PC-9 (cell line): ENCODE measurements at regions of chr5 and their contacts with region 1.

Region 1: DNA sequence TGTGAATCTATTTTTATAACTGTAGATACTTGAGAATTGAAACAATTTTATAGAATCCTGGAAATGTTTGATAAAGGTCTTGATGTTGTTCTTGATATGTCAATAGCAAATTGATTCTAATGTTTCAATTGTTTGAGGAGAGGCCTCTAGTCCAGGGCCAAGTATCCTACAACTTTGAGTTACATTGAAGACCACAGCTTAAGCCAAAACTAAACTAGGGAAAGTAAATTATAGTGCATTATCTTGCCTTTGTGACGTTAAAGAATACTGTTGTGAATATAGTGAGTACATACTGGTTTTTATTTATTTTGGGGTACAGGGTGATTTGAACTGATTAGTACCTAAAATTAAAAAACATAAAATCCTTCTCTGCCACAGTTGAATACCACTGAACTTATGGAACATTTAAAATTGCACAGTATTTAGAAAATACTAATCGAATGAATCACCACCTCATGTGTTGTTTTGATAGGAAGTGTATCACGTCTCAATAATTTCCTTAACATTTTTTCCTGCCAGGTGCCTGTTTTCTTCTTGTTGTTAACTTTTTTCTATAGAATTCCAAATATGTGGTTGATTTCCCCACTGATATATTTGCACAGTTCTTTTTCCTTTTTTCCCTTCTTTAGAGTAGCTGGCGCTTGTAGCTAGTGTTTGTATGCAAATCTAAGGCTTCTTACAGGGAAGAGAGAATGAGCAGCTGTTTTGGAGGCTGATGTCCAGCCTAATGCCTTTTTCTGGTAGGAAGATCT is 12.5 kb downstream of the ARHGEF28 start:
- DNase-seq: peak in 1 of 2 experiments; percentile 95
- H3K4me3 ChIP-seq: peak overlapping the region; percentile 15; the same call in 1 of the 2 replicates
- H3K27ac ChIP-seq: peak overlapping the region; percentile 90
- H3K4me1 ChIP-seq: peaks cover 77% of the 10 kb centered on the region
- H3K27me3 ChIP-seq: no peaks in the 10 kb centered on the region
- CTCF ChIP-seq: no peak

Region 2: DNA sequence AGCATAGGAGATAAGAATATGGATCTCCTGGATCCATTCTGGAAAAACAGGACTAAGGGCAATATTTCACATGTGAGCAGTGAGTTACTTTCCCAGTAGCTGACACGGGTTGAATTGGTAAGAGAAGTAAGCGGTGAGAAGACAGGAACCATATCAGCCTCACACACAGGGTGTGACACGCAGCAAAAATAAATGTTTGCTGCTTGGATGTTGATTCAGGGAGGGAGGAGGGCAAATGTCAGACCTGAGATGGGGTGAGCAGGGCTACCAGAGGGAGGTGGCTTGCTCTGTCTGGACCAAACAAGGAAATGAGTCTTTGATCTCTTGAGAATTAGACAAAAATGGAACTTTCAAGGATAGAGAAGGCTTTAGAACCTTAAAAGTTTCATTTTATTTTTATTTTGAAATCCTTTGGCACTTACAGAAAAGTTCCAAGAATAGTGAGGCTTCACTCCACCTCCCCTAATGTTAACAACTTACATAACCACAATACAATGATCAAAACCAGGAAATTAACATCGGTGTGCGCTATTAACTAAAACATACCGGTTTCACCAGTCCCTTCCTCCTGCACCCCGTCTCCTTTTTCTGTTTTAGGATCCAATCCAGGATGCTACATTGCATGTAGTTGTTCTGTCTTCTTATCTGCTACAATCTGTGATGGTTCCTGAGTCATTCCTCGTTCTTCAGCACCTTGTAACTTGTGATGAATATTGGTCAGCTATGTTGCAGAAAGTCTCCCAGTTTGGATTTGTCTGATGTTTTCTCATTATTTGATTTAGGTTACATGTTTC is 33.1 kb before region 1 on chr5:
- CTCF ChIA-PET with region 1: no interaction called
- POLR2A ChIA-PET with region 1: no interaction called
- intact Hi-C with region 1: no loop called
- DNase-seq: peak; percentile 38 to 86
- H3K4me3 ChIP-seq: peak overlapping the region; percentile 30; the same call in 1 of the 2 replicates
- H3K27ac ChIP-seq: peak overlapping the region; percentile 74
- H3K4me1 ChIP-seq: peaks cover 40% of the 10 kb centered on the region
- H3K27me3 ChIP-seq: no peaks in the 10 kb centered on the region
- CTCF ChIP-seq: no peak

Region 3: GRCh38 chr5:73654171-73654811 is 15.8 kb after region 1 on chr5:
- CTCF ChIA-PET with region 1: no interaction called
- POLR2A ChIA-PET with region 1: interaction called, 15 read pairs
- intact Hi-C with region 1: loop called (anchors 1 kb)
- DNase-seq: peak; percentile 61 to 96
- H3K4me3 ChIP-seq: no peak overlapping the region
- H3K27ac ChIP-seq: peak overlapping the region; percentile 96
- H3K4me1 ChIP-seq: peaks cover 65% of the 10 kb centered on the region
- H3K27me3 ChIP-seq: no peaks in the 10 kb centered on the region
- CTCF ChIP-seq: no peak

Region 4: GRCh38 chr5:73733219-73733618 is 94.7 kb after region 1 on chr5:
- CTCF ChIA-PET with region 1: no interaction called
- POLR2A ChIA-PET with region 1: interaction called, 30 read pairs
- intact Hi-C with region 1: no loop called
- DNase-seq: no peak
- H3K4me3 ChIP-seq: no peak overlapping the region
- H3K27ac ChIP-seq: no peak overlapping the region
- H3K4me1 ChIP-seq: no peaks in the 10 kb centered on the region
- H3K27me3 ChIP-seq: no peaks in the 10 kb centered on the region
- CTCF ChIP-seq: no peak